ENCODE measurements at regions of chr5 and their contacts with region 1.

Region 1: GRCh38 chr5:95718203-95718602 is 12.9 kb upstream of the RHOBTB3 start:
- DNase-seq: no peak
- H3K4me3 ChIP-seq: no peak overlapping the region
- H3K27ac ChIP-seq: no peak overlapping the region
- H3K27me3 ChIP-seq: no peaks in the 10 kb centered on the region
- CTCF ChIP-seq: no peak

Region 2: DNA sequence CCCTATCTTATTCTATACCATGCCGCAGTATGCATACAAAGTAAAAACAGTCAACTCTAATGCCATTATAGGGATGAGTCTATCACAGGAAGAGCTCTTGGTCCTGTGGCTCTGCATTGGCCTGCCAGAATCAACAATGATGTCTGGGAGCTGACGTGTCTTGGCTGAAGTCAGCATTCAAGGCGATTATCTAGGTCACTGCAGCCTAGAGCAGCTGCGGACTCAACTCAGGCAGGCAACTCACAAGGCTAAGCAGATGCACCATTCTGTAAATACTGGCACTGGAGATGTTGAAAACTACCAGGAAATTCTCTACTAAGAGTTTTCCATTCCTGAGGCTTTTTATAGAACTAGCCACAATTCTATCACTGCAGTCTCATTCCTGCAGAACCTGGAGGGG is 48.7 kb before region 1 on chr5:
- intact Hi-C with region 1: loop called in 1 of 2 experiments (anchors 5 kb)
- DNase-seq: peak in 9 of 10 donors; percentile 37 to 83 (median 71)
- H3K4me3 ChIP-seq: peak overlapping the region in 1 of 59 donors; percentile 6
- H3K27ac ChIP-seq: peak overlapping the region in 58 of 59 donors; percentile 3 to 93 (median 74)
- H3K27me3 ChIP-seq: no peaks in the 10 kb centered on the region
- CTCF ChIP-seq: peak in 1 of 56 donors; percentile 17